ENCODE measurements at regions of chr18 and their contacts with region 1.

Region 1: DNA sequence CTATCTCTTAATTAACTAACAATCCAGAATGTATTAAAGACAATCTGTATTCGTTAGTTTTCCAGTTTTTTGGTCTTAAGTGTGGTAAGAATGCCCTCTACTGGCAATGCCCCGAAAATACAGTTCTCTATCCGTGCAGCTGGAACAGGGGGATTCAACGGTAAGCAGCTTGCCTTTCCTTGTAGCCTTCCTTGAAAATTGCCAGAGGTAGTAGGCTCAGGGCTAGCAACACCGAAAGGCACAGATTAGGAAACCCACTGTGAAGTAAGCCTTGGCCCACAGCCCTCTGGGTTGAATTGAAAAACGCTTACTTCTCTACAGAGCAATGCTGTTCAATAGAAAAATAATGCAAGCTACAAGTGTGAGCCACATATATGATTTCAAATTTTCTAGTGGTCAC is 17.1 kb upstream of the VPS4B start:
- DNase-seq: no peak
- ATAC-seq: peak; percentile 78
- H3K4me3 ChIP-seq: no peak overlapping the region
- H3K27ac ChIP-seq: no peak overlapping the region
- H3K4me1 ChIP-seq: no peaks in the 10 kb centered on the region
- H3K27me3 ChIP-seq: no peaks in the 10 kb centered on the region
- CTCF ChIP-seq: peak; percentile 82 to 86 (median 86)
- EP300 ChIP-seq: no peak
- POLR2A ChIP-seq: no peak
- RAD21 ChIP-seq: peak; percentile 85

Region 2: GRCh38 chr18:62425465-62426195 is 1013.7 kb before region 1 on chr18:
- CTCF ChIA-PET with region 1: no interaction called
- POLR2A ChIA-PET with region 1: no interaction called
- RAD21 ChIA-PET with region 1: interaction called, 6 read pairs
- SMC1A ChIA-PET with region 1: no interaction called
- in situ Hi-C with region 1: no loop called
- intact Hi-C with region 1: loop called (anchors 5 kb)
- DNase-seq: no peak
- ATAC-seq: peak; percentile 81
- H3K4me3 ChIP-seq: no peak overlapping the region
- H3K27ac ChIP-seq: no peak overlapping the region
- H3K4me1 ChIP-seq: peaks cover 3% of the 10 kb centered on the region
- H3K27me3 ChIP-seq: peaks cover 0 to 5% of the 10 kb centered on the region in 2 experiments; a peak in 1 of 4 replicates
- CTCF ChIP-seq: peak; percentile 78 to 82 (median 82)
- EP300 ChIP-seq: no peak
- POLR2A ChIP-seq: no peak
- RAD21 ChIP-seq: peak; percentile 87

Region 3: GRCh38 chr18:62714671-62715435 is 724.5 kb before region 1 on chr18:
- CTCF ChIA-PET with region 1: interaction called, 6 read pairs
- POLR2A ChIA-PET with region 1: no interaction called
- RAD21 ChIA-PET with region 1: interaction called, 7 read pairs
- SMC1A ChIA-PET with region 1: no interaction called
- in situ Hi-C with region 1: no loop called
- intact Hi-C with region 1: loop called (anchors 10 kb)
- DNase-seq: peak; percentile 93
- ATAC-seq: peak; percentile 83
- H3K4me3 ChIP-seq: peak overlapping the region; percentile 79
- H3K27ac ChIP-seq: no peak overlapping the region
- H3K4me1 ChIP-seq: 0 out of 2 replicates have a peak, but pooled peaks cover 2% of the 10 kb centered on the region
- H3K27me3 ChIP-seq: no peaks in the 10 kb centered on the region
- CTCF ChIP-seq: peak; percentile 73 to 86 (median 78)
- EP300 ChIP-seq: peak in 1 of 2 experiments; percentile 31; a peak in 1 of 4 replicates
- POLR2A ChIP-seq: no peak; the same call in 1 of the 2 replicates
- RAD21 ChIP-seq: peak; percentile 79

Region 4: GRCh38 chr18:63025251-63026090 is 413.9 kb before region 1 on chr18:
- CTCF ChIA-PET with region 1: interaction called, 16 read pairs
- POLR2A ChIA-PET with region 1: interaction called, 3 read pairs
- RAD21 ChIA-PET with region 1: interaction called, 22 read pairs
- SMC1A ChIA-PET with region 1: interaction called, 6 read pairs
- in situ Hi-C with region 1: no loop called
- intact Hi-C with region 1: no loop called
- DNase-seq: no peak
- ATAC-seq: peak; percentile 59; the same call in 2 of the 3 replicates
- H3K4me3 ChIP-seq: no peak overlapping the region
- H3K27ac ChIP-seq: no peak overlapping the region
- H3K4me1 ChIP-seq: no peaks in the 10 kb centered on the region
- H3K27me3 ChIP-seq: no peaks in the 10 kb centered on the region
- CTCF ChIP-seq: peak; percentile 36 to 59 (median 40); a peak in 4 of 6 replicates
- EP300 ChIP-seq: no peak
- POLR2A ChIP-seq: no peak
- RAD21 ChIP-seq: peak; percentile 72

Region 5: GRCh38 chr18:63131106-63131958 is 308.0 kb before region 1 on chr18:
- CTCF ChIA-PET with region 1: interaction called, 4 read pairs
- POLR2A ChIA-PET with region 1: no interaction called
- RAD21 ChIA-PET with region 1: interaction called, 3 read pairs
- SMC1A ChIA-PET with region 1: interaction called, 3 read pairs
- in situ Hi-C with region 1: no loop called
- intact Hi-C with region 1: loop called (anchors 5 kb)
- DNase-seq: no peak
- ATAC-seq: peak; percentile 84
- H3K4me3 ChIP-seq: no peak overlapping the region
- H3K27ac ChIP-seq: peak overlapping the region; percentile 49
- H3K4me1 ChIP-seq: peaks cover 24% of the 10 kb centered on the region
- H3K27me3 ChIP-seq: no peaks in the 10 kb centered on the region
- CTCF ChIP-seq: peak; percentile 52 to 65 (median 59)
- EP300 ChIP-seq: no peak
- POLR2A ChIP-seq: no peak
- RAD21 ChIP-seq: peak; percentile 76

Region 6: DNA sequence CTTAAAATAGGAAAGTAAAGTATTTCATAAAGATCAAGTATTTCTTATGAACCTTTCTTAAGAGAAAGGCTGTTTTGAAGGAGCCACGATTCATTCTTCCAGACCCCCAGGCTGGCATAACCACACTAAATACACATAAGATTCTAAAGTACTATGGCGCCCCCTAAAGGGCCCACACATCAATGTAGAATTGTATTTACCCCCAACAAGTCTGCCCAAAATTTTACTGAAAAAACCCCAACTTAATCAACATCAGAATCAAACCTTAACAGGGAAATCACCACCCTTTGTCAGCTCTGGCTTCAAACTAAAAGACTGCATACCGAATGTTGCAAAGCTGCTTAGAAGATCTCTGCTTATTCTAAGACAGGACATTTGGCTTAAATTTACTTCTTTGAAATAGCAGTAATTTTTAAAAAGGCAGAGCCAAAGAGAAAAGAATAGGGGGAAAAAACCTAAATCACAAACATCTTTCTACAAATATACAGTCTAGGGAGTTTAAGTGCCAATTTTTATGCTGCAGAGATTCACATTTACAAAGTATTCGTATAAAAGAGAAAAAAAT is 99.3 kb before region 1 on chr18:
- CTCF ChIA-PET with region 1: interaction called, 35 read pairs
- POLR2A ChIA-PET with region 1: no interaction called
- RAD21 ChIA-PET with region 1: interaction called, 8 read pairs
- SMC1A ChIA-PET with region 1: interaction called, 17 read pairs
- in situ Hi-C with region 1: no loop called
- intact Hi-C with region 1: loop called (anchors 1 kb)
- DNase-seq: no peak
- ATAC-seq: peak; percentile 82
- H3K4me3 ChIP-seq: no peak overlapping the region
- H3K27ac ChIP-seq: no peak overlapping the region
- H3K4me1 ChIP-seq: no peaks in the 10 kb centered on the region
- H3K27me3 ChIP-seq: no peaks in the 10 kb centered on the region
- CTCF ChIP-seq: peak; percentile 39 to 59 (median 53)
- EP300 ChIP-seq: no peak
- POLR2A ChIP-seq: no peak
- RAD21 ChIP-seq: peak; percentile 57

Region 7: GRCh38 chr18:63410792-63411191 is 28.5 kb before region 1 on chr18:
- CTCF ChIA-PET with region 1: interaction called, 18 read pairs
- POLR2A ChIA-PET with region 1: interaction called, 3 read pairs
- RAD21 ChIA-PET with region 1: interaction called, 3 read pairs
- SMC1A ChIA-PET with region 1: interaction called, 11 read pairs
- in situ Hi-C with region 1: no loop called
- intact Hi-C with region 1: no loop called
- DNase-seq: no peak
- ATAC-seq: no peak
- H3K4me3 ChIP-seq: no peak overlapping the region
- H3K27ac ChIP-seq: no peak overlapping the region
- H3K4me1 ChIP-seq: no peaks in the 10 kb centered on the region
- H3K27me3 ChIP-seq: no peaks in the 10 kb centered on the region
- CTCF ChIP-seq: no peak
- EP300 ChIP-seq: no peak
- POLR2A ChIP-seq: no peak
- RAD21 ChIP-seq: no peak

Region 8: DNA sequence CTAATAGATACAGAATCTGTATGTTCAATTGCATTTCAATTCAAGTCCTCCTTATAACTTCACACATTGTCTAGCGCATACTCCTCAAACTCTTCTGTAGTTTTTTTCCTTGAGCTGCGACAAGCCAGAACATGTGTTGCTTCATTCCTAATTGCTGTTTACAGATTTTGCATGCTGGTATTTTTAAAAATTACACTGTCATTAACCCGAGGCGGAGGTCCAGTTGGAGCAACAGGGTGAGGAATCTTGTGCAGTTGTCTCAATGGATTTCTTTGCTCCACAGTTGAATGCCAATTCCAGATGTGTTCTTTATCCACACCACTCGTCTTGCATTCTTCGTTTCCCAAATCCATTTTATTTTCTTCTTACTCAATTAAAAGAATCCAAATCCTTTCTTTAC is 131.4 kb after region 1 on chr18:
- CTCF ChIA-PET with region 1: no interaction called
- POLR2A ChIA-PET with region 1: no interaction called
- RAD21 ChIA-PET with region 1: no interaction called
- SMC1A ChIA-PET with region 1: no interaction called
- in situ Hi-C with region 1: no loop called
- intact Hi-C with region 1: no loop called
- DNase-seq: no peak
- ATAC-seq: no peak
- H3K4me3 ChIP-seq: no peak overlapping the region
- H3K27ac ChIP-seq: no peak overlapping the region
- H3K4me1 ChIP-seq: no peaks in the 10 kb centered on the region
- H3K27me3 ChIP-seq: peaks cover 0 to 5% of the 10 kb centered on the region in 2 experiments; a peak in 2 of 4 replicates
- CTCF ChIP-seq: no peak
- EP300 ChIP-seq: no peak
- POLR2A ChIP-seq: no peak
- RAD21 ChIP-seq: no peak

Region 9: GRCh38 chr18:63741769-63742168 is 302.4 kb after region 1 on chr18:
- CTCF ChIA-PET with region 1: no interaction called
- POLR2A ChIA-PET with region 1: no interaction called
- RAD21 ChIA-PET with region 1: no interaction called
- SMC1A ChIA-PET with region 1: no interaction called
- in situ Hi-C with region 1: no loop called
- intact Hi-C with region 1: no loop called
- DNase-seq: no peak
- ATAC-seq: no peak
- H3K4me3 ChIP-seq: no peak overlapping the region
- H3K27ac ChIP-seq: no peak overlapping the region
- H3K4me1 ChIP-seq: no peaks in the 10 kb centered on the region
- H3K27me3 ChIP-seq: no peaks in the 10 kb centered on the region
- CTCF ChIP-seq: peak in 1 of 3 experiments; percentile 12; a peak in 1 of 6 replicates
- EP300 ChIP-seq: no peak
- POLR2A ChIP-seq: no peak
- RAD21 ChIP-seq: peak; percentile 40; the same call in 1 of the 2 replicates